Right cardiac atrium (tissue), 5 donors: ENCODE measurements at regions of chr1 and their contacts with region 1.

Region 1: GRCh38 chr1:119286587-119287181 is 81.9 kb upstream of the HAO2 start:
- DNase-seq: no peak
- ATAC-seq: peak; percentile 35 to 47
- H3K4me3 ChIP-seq: no peak overlapping the region
- H3K27ac ChIP-seq: no peak overlapping the region
- H3K4me1 ChIP-seq: no peaks in the 10 kb centered on the region
- H3K27me3 ChIP-seq: no peaks in the 10 kb centered on the region

Region 2: DNA sequence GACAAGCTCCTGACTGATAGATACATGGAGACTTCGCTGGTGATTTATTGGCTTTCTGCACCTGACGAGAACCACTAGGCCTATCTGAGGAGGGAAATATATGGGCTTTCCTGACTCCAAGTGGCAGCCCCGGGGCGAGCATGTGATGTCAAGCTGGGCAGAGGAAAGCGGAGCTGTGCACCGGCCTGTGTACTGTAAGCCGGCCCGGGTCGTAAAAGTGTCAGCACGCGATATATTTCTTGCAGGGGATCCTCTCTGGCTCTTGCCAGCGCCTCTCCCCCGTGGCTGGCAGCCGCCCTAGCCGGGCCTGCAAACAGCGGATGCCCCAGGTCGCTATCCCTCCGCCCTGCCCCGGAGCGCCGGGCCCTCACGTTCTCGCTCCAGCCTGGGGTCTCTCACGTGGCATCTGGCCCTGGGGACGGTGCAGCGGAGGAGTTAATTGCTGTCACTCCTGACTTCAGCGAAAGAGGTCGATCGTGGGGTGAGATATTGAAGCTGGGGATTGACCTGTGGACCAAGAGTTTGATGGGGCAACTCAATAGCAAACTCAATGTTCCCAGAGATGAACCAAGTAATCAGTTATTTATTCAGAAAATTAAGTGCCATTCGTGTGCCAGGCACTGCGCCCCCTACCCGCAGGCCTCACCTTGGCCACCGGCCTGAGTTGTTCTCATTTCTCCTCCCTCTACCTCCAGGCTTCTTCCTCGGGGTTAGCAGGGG is 40.9 kb after region 1 on chr1:
- intact Hi-C with region 1: no loop called
- DNase-seq: peak; percentile 22 to 65 (median 64)
- ATAC-seq: peak; percentile 55 to 64
- H3K4me3 ChIP-seq: peak overlapping the region; percentile 40
- H3K27ac ChIP-seq: no peak overlapping the region
- H3K4me1 ChIP-seq: no peaks in the 10 kb centered on the region
- H3K27me3 ChIP-seq: no peaks in the 10 kb centered on the region

Region 3: GRCh38 chr1:119367427-119368124 is 80.9 kb after region 1 on chr1:
- intact Hi-C with region 1: loop called in 2 of 4 experiments (anchors 5 to 10 kb)
- DNase-seq: no peak
- ATAC-seq: no peak
- H3K4me3 ChIP-seq: no peak overlapping the region
- H3K27ac ChIP-seq: no peak overlapping the region
- H3K4me1 ChIP-seq: no peaks in the 10 kb centered on the region
- H3K27me3 ChIP-seq: no peaks in the 10 kb centered on the region

Region 4: GRCh38 chr1:119372490-119373086 is 85.9 kb after region 1 on chr1:
- intact Hi-C with region 1: loop called in 2 of 4 experiments (anchors 5 to 10 kb)
- DNase-seq: no peak
- ATAC-seq: no peak
- H3K4me3 ChIP-seq: no peak overlapping the region
- H3K27ac ChIP-seq: no peak overlapping the region
- H3K4me1 ChIP-seq: no peaks in the 10 kb centered on the region
- H3K27me3 ChIP-seq: no peaks in the 10 kb centered on the region

Region 5: GRCh38 chr1:119531624-119532323 is 245.1 kb after region 1 on chr1:
- intact Hi-C with region 1: no loop called
- DNase-seq: no peak
- ATAC-seq: no peak
- H3K4me3 ChIP-seq: no peak overlapping the region
- H3K27ac ChIP-seq: no peak overlapping the region
- H3K4me1 ChIP-seq: no peaks in the 10 kb centered on the region
- H3K27me3 ChIP-seq: no peaks in the 10 kb centered on the region